PC-9 (cell line): ENCODE measurements at regions of chr1 and their contacts with region 1.

Region 1: DNA sequence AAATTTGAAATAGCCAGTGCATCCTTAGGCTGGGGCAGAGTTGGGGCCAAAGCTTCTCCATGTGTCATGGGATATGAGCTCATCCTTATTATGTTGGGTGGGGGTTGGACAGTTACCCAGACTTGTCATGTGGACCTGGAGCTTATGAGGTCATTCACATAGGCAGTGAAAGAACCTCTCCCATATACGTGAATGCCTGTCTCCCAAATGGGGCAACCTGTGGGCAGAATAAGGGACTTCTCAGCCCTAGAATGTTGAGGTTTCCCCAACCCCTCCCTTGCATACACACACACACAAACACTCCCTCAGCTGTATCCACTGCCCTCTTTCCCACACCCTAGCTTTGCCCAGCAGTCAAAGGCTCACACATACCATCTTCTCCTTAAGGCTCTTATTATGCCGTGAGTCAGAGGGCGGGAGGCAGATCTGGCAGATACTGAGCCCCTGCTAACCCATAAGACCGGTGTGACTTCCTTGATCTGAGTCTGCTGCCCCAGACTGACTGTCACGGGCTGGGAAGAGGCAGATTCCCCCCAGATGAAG is 2.3 kb upstream of the IVL start:
- DNase-seq: peak; percentile 73 to 97
- H3K4me3 ChIP-seq: no peak overlapping the region
- H3K27ac ChIP-seq: peak overlapping the region; percentile 72
- H3K4me1 ChIP-seq: peaks cover 44% of the 10 kb centered on the region
- H3K27me3 ChIP-seq: no peaks in the 10 kb centered on the region
- CTCF ChIP-seq: no peak

Region 2: DNA sequence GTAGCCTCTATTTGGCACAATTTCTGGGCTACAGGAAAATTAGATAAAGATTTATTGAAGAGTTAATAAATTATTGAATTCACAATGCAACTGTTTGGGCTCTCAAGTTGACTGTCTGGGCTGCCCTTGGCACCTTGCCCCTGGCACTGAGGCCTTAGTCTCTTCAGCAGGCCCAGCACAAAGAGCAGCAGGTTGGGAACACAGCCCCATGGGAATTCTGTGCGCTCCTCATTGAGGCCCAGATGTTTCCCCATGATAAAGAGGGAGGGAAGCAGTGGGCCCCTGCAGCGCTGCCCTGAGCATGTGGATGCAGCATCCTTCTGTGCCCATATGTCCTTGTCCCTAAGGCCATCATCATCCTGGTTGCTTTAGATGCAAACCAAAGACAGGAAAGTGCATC is 494.9 kb before region 1 on chr1:
- CTCF ChIA-PET with region 1: no interaction called
- POLR2A ChIA-PET with region 1: no interaction called
- intact Hi-C with region 1: no loop called
- DNase-seq: no peak
- H3K4me3 ChIP-seq: no peak overlapping the region
- H3K27ac ChIP-seq: no peak overlapping the region
- H3K4me1 ChIP-seq: no peaks in the 10 kb centered on the region
- H3K27me3 ChIP-seq: peaks cover 63% of the 10 kb centered on the region
- CTCF ChIP-seq: no peak

Region 3: GRCh38 chr1:152869808-152870419 is 36.2 kb before region 1 on chr1:
- CTCF ChIA-PET with region 1: no interaction called
- POLR2A ChIA-PET with region 1: no interaction called
- intact Hi-C with region 1: loop called (anchors 5 kb)
- DNase-seq: peak in 1 of 2 experiments; percentile 14
- H3K4me3 ChIP-seq: no peak overlapping the region
- H3K27ac ChIP-seq: no peak overlapping the region
- H3K4me1 ChIP-seq: peaks cover 9% of the 10 kb centered on the region; the same call in 1 of the 2 replicates
- H3K27me3 ChIP-seq: no peaks in the 10 kb centered on the region
- CTCF ChIP-seq: peak; percentile 65

Region 4: GRCh38 chr1:152888126-152888525 is 18.0 kb before region 1 on chr1:
- CTCF ChIA-PET with region 1: no interaction called
- POLR2A ChIA-PET with region 1: interaction called, 19 read pairs
- intact Hi-C with region 1: no loop called
- DNase-seq: peak in 1 of 2 experiments; percentile 62
- H3K4me3 ChIP-seq: no peak overlapping the region
- H3K27ac ChIP-seq: no peak overlapping the region
- H3K4me1 ChIP-seq: peaks cover 9% of the 10 kb centered on the region; the same call in 1 of the 2 replicates
- H3K27me3 ChIP-seq: no peaks in the 10 kb centered on the region
- CTCF ChIP-seq: no peak

Region 5: GRCh38 chr1:152954434-152954833 is 48.3 kb after region 1 on chr1:
- CTCF ChIA-PET with region 1: no interaction called
- POLR2A ChIA-PET with region 1: no interaction called
- intact Hi-C with region 1: loop called (anchors 1 kb)
- DNase-seq: peak; percentile 31 to 93
- H3K4me3 ChIP-seq: 0 out of 2 replicates have a peak overlapping the region, but pooled peaks have one; percentile 18
- H3K27ac ChIP-seq: peak overlapping the region; percentile 67
- H3K4me1 ChIP-seq: peaks cover 35% of the 10 kb centered on the region
- H3K27me3 ChIP-seq: no peaks in the 10 kb centered on the region
- CTCF ChIP-seq: no peak

Region 6: GRCh38 chr1:152983743-152984142 is 77.6 kb after region 1 on chr1 and contains the start of gene SPRR1A:
- CTCF ChIA-PET with region 1: no interaction called
- POLR2A ChIA-PET with region 1: no interaction called
- intact Hi-C with region 1: loop called (anchors 5 kb)
- DNase-seq: peak; percentile 41 to 94
- H3K4me3 ChIP-seq: peak within 1 kb of the TSS; percentile 23; the same call in 1 of the 2 replicates
- H3K27ac ChIP-seq: peak within 1 kb of the TSS; percentile 76
- H3K4me1 ChIP-seq: peaks cover 32% of the 10 kb centered on the region
- H3K27me3 ChIP-seq: no peaks in the 10 kb centered on the region
- CTCF ChIP-seq: no peak
- total RNA-seq, gene SPRR1A: not detected in 2 replicates

Region 7: DNA sequence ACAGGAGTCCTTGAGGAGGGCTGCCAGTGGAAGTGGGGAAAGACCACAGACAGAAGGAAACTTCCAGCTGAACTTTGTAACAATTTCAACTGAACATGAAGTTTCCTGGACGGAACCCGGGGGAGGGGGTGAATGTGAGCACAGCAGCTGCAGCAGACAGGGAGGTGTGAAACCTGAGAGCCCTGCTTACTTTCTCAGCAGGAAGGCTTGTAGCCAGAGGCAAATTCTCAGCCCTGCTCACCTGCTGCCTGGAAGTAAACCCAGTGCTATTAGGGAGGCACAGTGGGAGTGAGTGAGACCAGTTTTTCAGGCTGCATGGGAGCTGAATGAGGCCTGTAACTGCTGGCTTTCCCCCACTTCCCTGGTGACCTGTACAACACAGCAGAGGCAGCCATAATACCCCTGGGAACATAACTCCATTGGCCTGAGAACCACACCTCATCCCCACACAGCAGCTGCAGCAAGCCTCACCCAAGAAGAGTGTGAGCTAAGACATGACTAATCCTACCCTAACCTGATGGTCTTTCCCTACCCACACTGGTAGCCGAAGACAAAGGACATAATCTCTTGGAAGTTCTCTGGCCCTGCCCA is 216.8 kb after region 1 on chr1:
- CTCF ChIA-PET with region 1: no interaction called
- POLR2A ChIA-PET with region 1: no interaction called
- intact Hi-C with region 1: loop called (anchors 2 kb)
- DNase-seq: peak; percentile 82 to 98
- H3K4me3 ChIP-seq: peak overlapping the region; percentile 41; the same call in 1 of the 2 replicates
- H3K27ac ChIP-seq: peak overlapping the region; percentile 96
- H3K4me1 ChIP-seq: peaks cover 17% of the 10 kb centered on the region
- H3K27me3 ChIP-seq: no peaks in the 10 kb centered on the region
- CTCF ChIP-seq: no peak